ENCODE measurements at regions of chrX and their contacts with region 1.

Region 1: GRCh38 chrX:119055687-119056086 is 17.1 kb upstream of the CT47C1 start:
- DNase-seq: no peak

Region 2: GRCh38 chrX:119075270-119076025 is 19.8 kb after region 1 on chrX:
- intact Hi-C with region 1: loop called in 1 of 2 experiments (anchors 2 kb)
- DNase-seq: no peak

Region 3: DNA sequence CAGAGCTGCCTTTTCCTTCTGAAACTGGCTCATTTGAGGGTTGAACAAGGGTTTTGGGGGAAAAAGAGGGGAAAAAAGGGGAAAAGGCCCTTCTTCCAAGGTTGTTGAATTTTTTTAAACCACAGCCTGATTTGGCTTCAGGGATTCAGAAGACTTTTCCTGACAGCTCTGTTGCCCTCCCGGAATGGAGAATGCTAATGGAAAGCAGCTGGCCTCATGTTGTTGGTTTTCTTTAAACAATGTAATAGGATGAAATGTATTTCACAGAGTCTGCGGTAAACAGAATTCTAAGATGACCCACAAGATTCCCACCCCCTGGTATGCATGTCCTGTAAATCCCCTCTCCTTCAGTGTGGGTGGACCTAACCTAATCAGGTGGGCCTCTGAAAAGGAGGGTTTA is 75.2 kb after region 1 on chrX:
- intact Hi-C with region 1: no loop called
- DNase-seq: no peak

Region 4: DNA sequence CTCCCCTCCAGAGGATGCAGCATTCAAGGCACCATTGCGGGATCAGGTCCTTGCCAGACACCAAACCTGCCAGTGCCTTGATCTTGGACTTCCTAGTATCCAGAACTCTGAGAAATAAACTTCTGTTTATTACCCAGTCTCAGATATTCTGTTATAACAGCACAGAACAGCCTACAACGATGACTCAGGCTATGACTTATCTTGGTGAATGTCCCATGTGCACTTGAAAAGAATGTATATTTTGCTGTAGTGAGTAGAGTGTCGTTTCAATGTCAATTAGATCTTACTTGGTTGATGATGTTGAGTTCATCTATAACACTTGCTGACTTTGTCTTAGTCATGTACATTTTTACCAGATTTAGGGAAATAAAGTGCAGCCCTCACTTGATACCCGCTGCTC is 145.9 kb after region 1 on chrX:
- intact Hi-C with region 1: no loop called
- DNase-seq: no peak